Dorsolateral prefrontal cortex (tissue), 120 donors: ENCODE measurements at regions of chr4 and their contacts with region 1.

Region 1: GRCh38 chr4:39638354-39639240 is at the start of gene SMIM14:
- DNase-seq: peak; percentile 97 to 100 (median 98)
- H3K4me3 ChIP-seq: peak within 1 kb of the TSS; percentile 69 to 98 (median 91)
- H3K27ac ChIP-seq: peak within 1 kb of the TSS; percentile 87 to 100 (median 99)
- H3K27me3 ChIP-seq: no peaks in the 10 kb centered on the region
- CTCF ChIP-seq: peak in 46 of 56 donors; percentile 6 to 67 (median 38)
- total RNA-seq, gene SMIM14: 22.3 to 73.2 (median 50.5) TPM

Region 2: GRCh38 chr4:39458505-39459300 is 179.9 kb before region 1 on chr4 and contains the starts of genes LIAS and RPL9:
- intact Hi-C with region 1: loop called in 1 of 2 experiments (anchors 5 kb)
- DNase-seq: peak; percentile 88 to 97 (median 93)
- H3K4me3 ChIP-seq: peak within 1 kb of the TSS; percentile 63 to 99 (median 91)
- H3K27ac ChIP-seq: peak within 1 kb of the TSS; percentile 3 to 98 (median 92)
- H3K27me3 ChIP-seq: no peaks in the 10 kb centered on the region
- CTCF ChIP-seq: peak in 17 of 56 donors; percentile 3 to 30 (median 14)
- total RNA-seq, gene LIAS: 16.1 to 30.6 (median 22.3) TPM
- total RNA-seq, gene RPL9: 295 to 743 (median 520) TPM

Region 3: GRCh38 chr4:39469429-39470077 is 169.0 kb before region 1 on chr4:
- intact Hi-C with region 1: loop called in 1 of 2 experiments (anchors 1 kb)
- DNase-seq: peak in 4 of 10 donors; percentile 15 to 40 (median 24)
- H3K4me3 ChIP-seq: peak overlapping the region in 10 of 59 donors; percentile 1 to 28 (median 6)
- H3K27ac ChIP-seq: peak overlapping the region; percentile 17 to 99 (median 84)
- H3K27me3 ChIP-seq: no peaks in the 10 kb centered on the region
- CTCF ChIP-seq: peak; percentile 81 to 97 (median 92)

Region 4: GRCh38 chr4:39697740-39698423 is 59.3 kb after region 1 on chr4 and contains the start of gene UBE2K:
- intact Hi-C with region 1: loop called (anchors 1 to 2 kb)
- DNase-seq: peak; percentile 57 to 92 (median 78)
- H3K4me3 ChIP-seq: peak within 1 kb of the TSS; percentile 66 to 98 (median 89)
- H3K27ac ChIP-seq: peak within 1 kb of the TSS; percentile 78 to 99 (median 94)
- H3K27me3 ChIP-seq: no peaks in the 10 kb centered on the region
- CTCF ChIP-seq: peak in 43 of 56 donors; percentile 10 to 68 (median 43)
- total RNA-seq, gene UBE2K: 44.7 to 140 (median 90.1) TPM

Region 5: DNA sequence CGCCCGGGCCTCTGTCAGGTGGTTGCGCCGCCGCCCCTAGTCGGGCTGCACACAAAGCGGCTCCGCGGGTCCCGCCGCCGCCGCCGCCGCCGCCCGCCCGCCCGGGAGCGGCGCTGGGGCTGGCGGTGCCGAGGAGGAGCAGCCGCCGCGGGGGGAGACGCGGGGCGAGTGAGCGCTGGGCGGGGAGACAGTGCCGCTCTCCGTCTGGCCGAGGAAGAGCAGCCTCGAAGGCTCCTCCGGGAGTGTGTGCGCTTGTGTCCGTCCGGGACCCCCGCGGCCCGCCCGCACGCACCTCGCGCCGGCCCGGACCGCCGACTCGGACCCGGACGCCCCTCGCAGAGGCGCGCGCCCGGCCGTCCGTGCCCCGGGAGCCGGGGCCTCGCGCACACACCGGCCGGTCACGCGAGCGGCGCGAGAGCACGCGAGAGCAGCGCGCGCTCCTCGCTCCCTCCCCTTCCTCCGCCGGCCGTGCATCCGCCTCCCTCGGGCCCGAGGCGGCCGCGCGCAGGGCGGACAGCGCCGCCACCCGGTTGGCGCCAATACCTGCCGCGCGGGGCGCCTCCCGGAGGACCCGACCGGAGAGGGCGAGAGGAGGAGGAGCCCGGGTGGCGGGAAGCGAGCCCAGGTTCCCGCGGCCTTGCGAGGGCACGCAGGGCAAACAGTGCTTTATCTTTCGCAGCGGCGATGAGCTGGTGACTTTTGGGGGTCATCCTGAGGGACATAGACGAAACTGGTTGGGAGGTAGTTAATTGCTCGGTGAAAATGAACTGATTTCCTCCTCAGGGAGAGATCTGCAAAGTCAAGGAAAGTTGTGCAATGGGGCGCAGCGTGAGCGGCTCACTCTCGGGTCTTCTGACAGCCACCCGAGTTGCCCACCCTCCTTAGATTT is 339.1 kb after region 1 on chr4 and contains the start of gene PDS5A:
- intact Hi-C with region 1: loop called (anchors 1 to 2 kb)
- DNase-seq: peak; percentile 67 to 89 (median 81)
- H3K4me3 ChIP-seq: peak within 1 kb of the TSS; percentile 62 to 98 (median 93)
- H3K27ac ChIP-seq: peak within 1 kb of the TSS; percentile 84 to 98 (median 95)
- H3K27me3 ChIP-seq: no peaks in the 10 kb centered on the region
- CTCF ChIP-seq: peak; percentile 54 to 93 (median 80)
- total RNA-seq, gene PDS5A: 43.7 to 92.5 (median 61.9) TPM